ENCODE measurements at regions of chr10 and their contacts with region 1.

Region 1: GRCh38 chr10:72048450-72049124 is 39.8 kb downstream of the SPOCK2 start:
- DNase-seq: peak; percentile 87
- CTCF ChIP-seq: peak; percentile 100

Region 2: GRCh38 chr10:71975891-71976725 is 72.5 kb before region 1 on chr10:
- CTCF ChIA-PET with region 1: interaction called, 10 read pairs
- POLR2A ChIA-PET with region 1: no interaction called
- DNase-seq: no peak
- CTCF ChIP-seq: no peak

Region 3: GRCh38 chr10:72030762-72031543 is 17.6 kb before region 1 on chr10:
- CTCF ChIA-PET with region 1: interaction called, 13 read pairs
- POLR2A ChIA-PET with region 1: no interaction called
- DNase-seq: no peak
- CTCF ChIP-seq: no peak

Region 4: DNA sequence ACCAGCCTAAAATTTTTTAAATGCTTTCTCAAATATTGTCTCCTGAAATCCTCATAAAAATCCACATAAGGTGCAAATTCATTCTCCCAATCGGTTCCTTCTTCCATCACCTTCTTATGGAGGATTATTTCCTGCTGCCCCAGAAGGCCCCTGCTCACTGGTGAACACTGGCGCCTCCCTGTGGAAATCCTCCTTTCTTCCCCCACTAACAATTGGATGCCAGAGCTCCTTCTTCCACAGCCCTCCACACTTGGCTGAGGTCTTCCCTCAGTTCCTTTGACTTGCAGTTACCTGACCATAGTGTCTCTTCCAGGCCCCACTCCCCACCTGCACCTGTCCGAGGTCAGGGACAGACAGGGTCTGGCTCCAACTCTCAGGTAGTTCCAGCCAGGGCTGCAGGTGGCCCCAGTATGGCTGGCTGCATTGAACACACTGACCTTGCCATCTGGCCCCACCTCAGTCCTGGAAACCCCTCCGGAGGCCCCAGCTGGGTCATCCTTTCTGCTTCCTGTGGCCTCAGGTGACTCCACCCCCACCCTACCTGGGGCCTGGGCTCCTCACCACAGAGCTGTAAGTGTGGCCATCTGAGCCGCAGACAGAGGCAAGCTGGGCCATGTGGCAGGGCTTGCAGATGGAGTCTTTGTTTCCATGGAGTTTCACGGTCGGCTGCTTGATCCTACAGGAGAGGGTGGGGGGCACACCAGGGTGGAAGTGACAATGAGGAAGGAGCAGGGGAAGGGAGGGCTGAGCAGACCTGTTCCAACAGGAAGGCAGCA is 21.4 kb after region 1 on chr10:
- CTCF ChIA-PET with region 1: interaction called, 45 read pairs
- POLR2A ChIA-PET with region 1: no interaction called
- DNase-seq: no peak
- CTCF ChIP-seq: no peak

Region 5: DNA sequence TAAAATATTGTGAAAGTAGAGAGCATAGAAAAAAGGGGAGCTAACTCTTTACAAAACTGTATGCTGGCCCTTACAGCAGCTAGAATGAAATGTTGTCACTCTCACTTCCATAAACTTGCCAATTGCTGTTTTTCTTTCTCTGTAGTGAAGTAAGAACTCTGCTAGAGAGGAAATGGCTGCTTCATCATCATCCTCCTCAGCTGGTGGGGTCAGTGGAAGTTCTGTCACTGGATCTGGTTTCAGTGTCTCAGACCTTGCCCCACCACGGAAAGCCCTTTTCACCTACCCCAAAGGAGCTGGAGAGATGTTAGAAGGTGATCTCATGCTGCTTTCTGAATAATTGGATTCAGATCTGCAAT is 175.1 kb after region 1 on chr10:
- CTCF ChIA-PET with region 1: interaction called, 12 read pairs
- POLR2A ChIA-PET with region 1: no interaction called
- DNase-seq: no peak
- CTCF ChIP-seq: no peak

Region 6: GRCh38 chr10:73252445-73253224 is 1204.0 kb after region 1 on chr10 and contains the start of gene MRPS16:
- CTCF ChIA-PET with region 1: no interaction called
- POLR2A ChIA-PET with region 1: no interaction called
- DNase-seq: peak; percentile 93
- CTCF ChIP-seq: no peak